Mammary epithelial cell (primary cell): ENCODE measurements at regions of chr4 and their contacts with region 1.

Region 1: GRCh38 chr4:99816545-99817308 is at the start of gene DAPP1:
- DNase-seq: peak; percentile 99
- H3K4me3 ChIP-seq: peak within 1 kb of the TSS; percentile 61 to 68 (median 68)
- H3K27ac ChIP-seq: peak within 1 kb of the TSS; percentile 94
- H3K4me1 ChIP-seq: peaks cover 43% of the 10 kb centered on the region
- H3K27me3 ChIP-seq: no peaks in the 10 kb centered on the region
- CTCF ChIP-seq: no peak
- total RNA-seq, gene DAPP1: 14.5 to 54.8 TPM

Region 2: GRCh38 chr4:99088481-99089365 is 728.0 kb before region 1 on chr4 and contains the start of gene ADH5:
- CTCF ChIA-PET with region 1: no interaction called
- dilution Hi-C with region 1: no loop called
- in situ Hi-C with region 1: no loop called
- intact Hi-C with region 1: loop called (anchors 10 kb)
- DNase-seq: peak; percentile 80
- H3K4me3 ChIP-seq: peak within 1 kb of the TSS; percentile 65 to 97 (median 84)
- H3K27ac ChIP-seq: peak within 1 kb of the TSS; percentile 94
- H3K4me1 ChIP-seq: peaks cover 22% of the 10 kb centered on the region
- H3K27me3 ChIP-seq: no peaks in the 10 kb centered on the region
- CTCF ChIP-seq: no peak
- total RNA-seq, gene ADH5: 192 to 237 TPM

Region 3: DNA sequence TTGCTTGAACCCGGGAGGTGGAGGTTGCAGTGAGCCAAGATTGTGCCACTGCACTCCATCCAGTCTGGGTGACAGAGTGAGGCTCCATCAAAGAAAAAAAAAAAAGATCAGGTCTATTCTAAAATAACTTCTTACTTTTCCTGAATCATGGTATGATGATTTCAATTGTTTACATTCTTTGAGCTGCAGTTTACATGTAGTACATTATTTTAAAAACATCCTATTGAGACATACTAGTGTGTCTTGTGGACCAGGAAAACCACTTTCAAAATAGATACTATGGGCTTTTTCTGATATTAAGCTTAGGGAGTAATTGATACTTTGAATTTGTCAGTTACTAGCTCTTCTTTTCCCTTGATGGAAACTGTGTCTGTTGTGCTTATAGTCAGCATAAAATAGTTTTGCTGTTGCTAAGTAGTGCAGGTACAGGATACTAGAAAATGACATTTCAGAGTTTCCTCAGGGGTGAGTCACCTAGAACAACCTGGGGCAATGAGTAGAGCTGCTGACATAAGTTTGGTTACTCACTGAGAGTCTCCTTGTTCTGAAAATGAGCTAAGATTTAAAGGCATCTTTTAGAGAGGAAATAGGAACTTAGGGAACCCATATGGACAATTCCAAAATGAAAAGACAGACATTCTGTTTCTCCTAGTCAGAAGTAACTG is 105.9 kb before region 1 on chr4:
- CTCF ChIA-PET with region 1: no interaction called
- dilution Hi-C with region 1: loop called (anchors 5 kb)
- in situ Hi-C with region 1: no loop called
- intact Hi-C with region 1: no loop called
- DNase-seq: peak; percentile 95
- H3K4me3 ChIP-seq: no peak overlapping the region
- H3K27ac ChIP-seq: peak overlapping the region; percentile 90
- H3K4me1 ChIP-seq: peaks cover 32% of the 10 kb centered on the region
- H3K27me3 ChIP-seq: no peaks in the 10 kb centered on the region
- CTCF ChIP-seq: no peak

Region 4: GRCh38 chr4:99885063-99885664 is 68.4 kb after region 1 on chr4:
- CTCF ChIA-PET with region 1: interaction called, 3 read pairs
- dilution Hi-C with region 1: no loop called
- in situ Hi-C with region 1: loop called (anchors 5 kb)
- intact Hi-C with region 1: loop called (anchors 1 kb)
- DNase-seq: peak; percentile 34
- H3K4me3 ChIP-seq: no peak overlapping the region
- H3K27ac ChIP-seq: no peak overlapping the region
- H3K4me1 ChIP-seq: no peaks in the 10 kb centered on the region
- H3K27me3 ChIP-seq: no peaks in the 10 kb centered on the region
- CTCF ChIP-seq: peak; percentile 60 to 61

Region 5: DNA sequence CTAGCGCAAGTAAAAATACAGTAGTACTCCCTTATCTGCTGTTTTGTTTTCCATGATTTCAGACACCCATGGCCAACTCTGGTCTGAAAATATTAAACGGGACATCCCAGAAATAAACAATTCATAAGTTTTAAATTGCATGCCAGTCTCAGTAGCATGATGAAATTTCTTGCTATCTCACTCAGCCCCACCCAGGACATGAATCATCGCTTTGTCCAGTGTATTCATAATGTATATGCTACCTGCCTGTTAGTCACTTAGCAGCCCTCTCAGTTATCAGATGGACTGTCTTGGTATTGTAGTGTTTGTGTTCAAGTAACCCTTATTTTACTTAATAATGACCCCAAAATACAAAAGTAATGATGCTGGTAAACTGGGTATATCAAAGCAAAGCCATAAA is 531.7 kb after region 1 on chr4:
- CTCF ChIA-PET with region 1: no interaction called
- dilution Hi-C with region 1: no loop called
- in situ Hi-C with region 1: no loop called
- intact Hi-C with region 1: loop called (anchors 5 kb)
- DNase-seq: peak; percentile 91
- H3K4me3 ChIP-seq: no peak overlapping the region
- H3K27ac ChIP-seq: peak overlapping the region; percentile 95
- H3K4me1 ChIP-seq: peaks cover 12% of the 10 kb centered on the region
- H3K27me3 ChIP-seq: no peaks in the 10 kb centered on the region
- CTCF ChIP-seq: no peak

Region 6: DNA sequence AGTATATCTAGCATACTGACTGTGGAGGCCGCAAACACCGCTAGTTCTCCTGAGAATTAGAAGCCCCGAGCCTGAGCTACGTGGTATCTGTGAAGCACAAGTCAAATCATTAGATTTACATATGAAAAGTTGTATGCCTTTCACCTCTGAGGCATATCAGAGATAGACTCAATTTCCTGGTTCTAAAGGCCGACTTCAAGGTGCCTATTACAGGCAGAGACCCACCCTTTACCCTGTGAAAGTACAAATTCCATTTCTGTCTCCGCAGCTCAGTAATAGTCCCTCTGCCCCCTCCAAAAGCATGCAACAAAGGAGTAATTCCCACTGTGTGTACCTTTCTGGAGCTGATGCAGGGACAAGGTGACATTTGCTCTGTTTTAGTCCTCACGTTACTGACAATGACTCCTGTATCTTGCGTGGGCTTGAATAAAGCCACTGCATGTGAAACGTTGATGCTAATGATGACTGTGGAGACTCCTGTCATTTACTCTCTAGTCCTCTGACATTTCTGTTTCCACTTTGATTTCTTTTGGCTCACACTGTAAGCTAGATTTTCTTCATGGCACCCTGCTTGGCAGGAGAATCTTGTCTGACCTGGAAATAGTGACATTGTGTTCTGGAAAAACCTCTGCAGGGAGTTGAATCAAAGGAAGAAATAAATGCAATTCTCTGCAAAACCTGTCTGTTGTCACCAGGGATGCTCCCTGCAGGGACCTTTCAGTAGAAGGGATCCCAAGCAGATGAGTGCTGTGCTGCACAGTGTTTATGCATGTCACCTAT is 974.3 kb after region 1 on chr4:
- CTCF ChIA-PET with region 1: no interaction called
- dilution Hi-C with region 1: no loop called
- in situ Hi-C with region 1: no loop called
- intact Hi-C with region 1: no loop called
- DNase-seq: no peak
- H3K4me3 ChIP-seq: no peak overlapping the region
- H3K27ac ChIP-seq: no peak overlapping the region
- H3K4me1 ChIP-seq: no peaks in the 10 kb centered on the region
- H3K27me3 ChIP-seq: no peaks in the 10 kb centered on the region
- CTCF ChIP-seq: no peak